ENCODE measurements at regions of chr10 and their contacts with region 1.

Region 1: GRCh38 chr10:95289003-95289920 is 1.5 kb downstream of the PDLIM1 start:
- DNase-seq: peak; percentile 71
- ATAC-seq: peak; percentile 23
- H3K4me3 ChIP-seq: peak overlapping the region; percentile 95
- H3K27ac ChIP-seq: peak overlapping the region; percentile 29; the same call in 1 of the 2 replicates
- H3K4me1 ChIP-seq: peaks cover 26% of the 10 kb centered on the region
- H3K27me3 ChIP-seq: no peaks in the 10 kb centered on the region
- CTCF ChIP-seq: peak; percentile 45

Region 2: GRCh38 chr10:95273393-95274312 is 15.6 kb before region 1 on chr10:
- CTCF ChIA-PET with region 1: no interaction called
- POLR2A ChIA-PET with region 1: no interaction called
- intact Hi-C with region 1: loop called (anchors 2 kb)
- DNase-seq: peak; percentile 84
- ATAC-seq: peak; percentile 94
- H3K4me3 ChIP-seq: peak overlapping the region; percentile 22; the same call in 1 of the 2 replicates
- H3K27ac ChIP-seq: peak overlapping the region; percentile 57
- H3K4me1 ChIP-seq: peaks cover 18% of the 10 kb centered on the region
- H3K27me3 ChIP-seq: no peaks in the 10 kb centered on the region
- CTCF ChIP-seq: no peak

Region 3: GRCh38 chr10:95308389-95309302 is 19.4 kb after region 1 on chr10:
- CTCF ChIA-PET with region 1: no interaction called
- POLR2A ChIA-PET with region 1: no interaction called
- intact Hi-C with region 1: loop called (anchors 2 kb)
- DNase-seq: peak; percentile 97
- ATAC-seq: peak; percentile 95
- H3K4me3 ChIP-seq: peak overlapping the region; percentile 50; the same call in 1 of the 2 replicates
- H3K27ac ChIP-seq: peak overlapping the region; percentile 81
- H3K4me1 ChIP-seq: peaks cover 32% of the 10 kb centered on the region
- H3K27me3 ChIP-seq: no peaks in the 10 kb centered on the region
- CTCF ChIP-seq: no peak

Region 4: GRCh38 chr10:96850825-96851224 is 1561.6 kb after region 1 on chr10:
- CTCF ChIA-PET with region 1: no interaction called
- POLR2A ChIA-PET with region 1: no interaction called
- intact Hi-C with region 1: no loop called
- DNase-seq: peak; percentile 47
- ATAC-seq: peak; percentile 71
- H3K4me3 ChIP-seq: no peak overlapping the region
- H3K27ac ChIP-seq: no peak overlapping the region
- H3K4me1 ChIP-seq: peaks cover 12% of the 10 kb centered on the region
- H3K27me3 ChIP-seq: no peaks in the 10 kb centered on the region
- CTCF ChIP-seq: no peak